A549 (cell line): ENCODE measurements at regions of chr2 and their contacts with region 1.

Region 1: GRCh38 chr2:71331581-71332434 is at the start of gene ZNF638:
- DNase-seq: peak; percentile 92 to 94
- ATAC-seq: peak; percentile 98 to 99
- H3K4me3 ChIP-seq: peak within 1 kb of the TSS; percentile 89
- H3K27ac ChIP-seq: peak within 1 kb of the TSS; percentile 88 to 96
- H3K4me1 ChIP-seq: peaks cover 29% of the 10 kb centered on the region
- CTCF ChIP-seq: peak; percentile 95
- EP300 ChIP-seq: no peak
- POLR2A ChIP-seq: peak; percentile 90
- RAD21 ChIP-seq: peak in 1 of 2 experiments; percentile 63; a peak in 3 of 5 replicates
- polyA plus RNA-seq, gene ZNF638: 148 and 160 TPM in 2 replicates

Region 2: DNA sequence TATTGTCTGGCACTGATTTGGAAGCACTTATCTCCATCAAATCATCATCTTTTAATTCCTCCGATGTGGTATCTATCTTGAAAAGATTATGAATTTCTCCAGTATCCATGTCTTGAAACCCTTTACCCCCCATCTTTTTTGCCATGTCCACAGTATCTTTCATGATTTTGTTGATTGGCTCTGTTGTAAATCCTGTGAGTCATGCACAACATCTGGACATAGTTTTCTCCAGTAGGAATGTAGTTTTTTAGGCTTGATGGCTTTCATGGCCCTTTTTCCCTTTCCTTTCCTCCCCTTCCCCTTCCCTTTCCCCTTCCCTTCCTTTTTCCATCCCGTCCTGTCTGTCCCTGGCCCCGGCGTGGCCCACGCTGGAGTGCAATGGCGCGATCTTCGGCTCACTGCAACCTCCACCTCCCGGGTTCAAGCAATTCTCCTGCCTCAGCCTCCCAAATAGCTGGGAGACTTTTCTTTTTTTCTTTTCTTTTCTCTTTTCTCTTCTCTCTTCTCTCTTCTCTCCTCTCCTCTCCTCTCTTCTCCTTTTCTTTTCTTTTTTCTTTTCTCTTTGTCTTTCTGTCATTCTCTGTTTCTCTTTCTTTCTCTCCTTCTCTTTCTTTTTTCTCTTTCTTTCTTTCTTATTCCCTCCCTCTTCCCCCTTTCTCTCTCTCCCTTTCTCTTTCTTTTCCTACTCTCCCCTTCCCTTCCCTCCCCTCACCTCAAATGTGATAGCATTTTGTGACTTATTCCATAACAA is 18.6 kb before region 1 on chr2:
- CTCF ChIA-PET with region 1: interaction called, 10 read pairs
- POLR2A ChIA-PET with region 1: no interaction called
- DNase-seq: no peak
- ATAC-seq: no peak
- H3K4me3 ChIP-seq: no peak overlapping the region
- H3K27ac ChIP-seq: no peak overlapping the region
- H3K4me1 ChIP-seq: no peaks in the 10 kb centered on the region
- CTCF ChIP-seq: no peak
- EP300 ChIP-seq: no peak
- POLR2A ChIP-seq: no peak
- RAD21 ChIP-seq: no peak

Region 3: DNA sequence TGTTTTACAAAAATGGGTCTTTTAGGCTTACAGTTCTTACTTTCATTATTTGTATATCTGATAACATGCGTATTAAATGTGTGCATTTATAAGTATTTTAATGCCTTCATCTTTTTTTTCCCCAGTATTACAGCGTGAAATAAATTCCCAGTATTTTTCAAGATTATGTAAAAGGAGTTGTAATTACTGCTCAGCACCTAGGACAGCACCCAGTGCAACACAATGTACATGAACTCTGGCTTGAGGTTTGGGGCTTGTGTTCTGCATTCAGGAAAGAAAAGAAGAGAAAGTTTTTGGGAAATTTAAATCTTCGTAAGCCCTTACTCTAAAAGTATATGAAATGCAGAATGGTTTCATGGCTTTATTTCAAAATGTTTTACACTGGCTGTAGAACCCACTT is 16.5 kb after region 1 on chr2:
- CTCF ChIA-PET with region 1: interaction called, 26 read pairs
- POLR2A ChIA-PET with region 1: interaction called, 25 read pairs
- DNase-seq: peak in 1 of 2 experiments; percentile 19
- ATAC-seq: no peak
- H3K4me3 ChIP-seq: no peak overlapping the region
- H3K27ac ChIP-seq: no peak overlapping the region
- H3K4me1 ChIP-seq: no peaks in the 10 kb centered on the region
- CTCF ChIP-seq: no peak
- EP300 ChIP-seq: no peak
- POLR2A ChIP-seq: no peak
- RAD21 ChIP-seq: no peak